ENCODE measurements at regions of chr2 and their contacts with region 1.

Region 1: GRCh38 chr2:131093006-131093695 is at the start of gene FAM168B:
- DNase-seq: peak; percentile 89 to 95
- H3K4me3 ChIP-seq: peak within 1 kb of the TSS; percentile 51
- H3K4me3 Mint-ChIP-seq: peak within 1 kb of the TSS; percentile 90
- H3K27ac Mint-ChIP-seq: peak within 1 kb of the TSS; percentile 98
- H3K4me1 ChIP-seq: peaks cover 16% of the 10 kb centered on the region
- H3K4me1 Mint-ChIP-seq: peaks cover 9% of the 10 kb centered on the region
- H3K27me3 ChIP-seq: no peaks in the 10 kb centered on the region
- H3K27me3 Mint-ChIP-seq: no peaks in the 10 kb centered on the region
- CTCF ChIP-seq: no peak
- total RNA-seq, gene FAM168B: 109 and 119 TPM in 2 replicates

Region 2: DNA sequence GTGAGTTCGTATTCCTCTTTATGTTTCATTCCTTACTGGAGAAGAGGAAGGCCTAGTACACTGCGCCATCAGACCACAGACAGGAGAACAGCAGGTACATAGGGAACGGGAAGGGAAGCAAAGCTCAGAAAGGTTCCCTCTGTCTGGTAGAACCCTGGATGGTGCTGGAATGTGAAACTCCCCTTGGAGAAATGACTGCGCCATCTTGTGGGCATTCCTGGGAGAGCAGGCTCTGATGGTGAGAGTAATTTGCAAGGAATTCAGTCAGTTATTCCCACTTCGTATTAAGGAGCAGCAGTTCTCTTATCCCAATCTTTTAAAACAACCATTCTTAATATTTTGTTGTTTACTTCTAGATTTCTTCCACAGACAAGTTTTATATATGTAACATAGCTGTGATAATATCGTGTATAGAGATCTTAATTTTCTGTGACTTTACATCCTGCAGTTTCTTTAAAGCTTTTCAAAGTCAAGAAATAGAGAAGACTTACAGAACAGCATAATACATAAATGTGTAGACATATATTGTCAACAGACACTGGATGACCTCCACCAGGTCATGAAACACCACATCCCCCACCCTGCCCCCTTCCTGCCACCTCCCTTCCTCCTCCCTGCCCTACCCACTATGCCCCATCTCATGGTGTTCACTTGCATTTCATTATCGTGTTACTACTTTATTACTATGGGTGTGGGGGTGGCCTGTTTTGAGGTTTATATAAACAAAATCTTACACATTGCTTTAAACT is 172.6 kb before region 1 on chr2:
- CTCF ChIA-PET with region 1: no interaction called
- POLR2A ChIA-PET with region 1: interaction called, 10 read pairs
- intact Hi-C with region 1: no loop called
- DNase-seq: peak; percentile 71 to 82
- H3K4me3 ChIP-seq: no peak overlapping the region
- H3K4me3 Mint-ChIP-seq: no peak overlapping the region
- H3K27ac Mint-ChIP-seq: no peak overlapping the region
- H3K4me1 ChIP-seq: no peaks in the 10 kb centered on the region
- H3K4me1 Mint-ChIP-seq: no peaks in the 10 kb centered on the region
- H3K27me3 ChIP-seq: no peaks in the 10 kb centered on the region
- H3K27me3 Mint-ChIP-seq: no peaks in the 10 kb centered on the region
- CTCF ChIP-seq: peak; percentile 82 to 88

Region 3: DNA sequence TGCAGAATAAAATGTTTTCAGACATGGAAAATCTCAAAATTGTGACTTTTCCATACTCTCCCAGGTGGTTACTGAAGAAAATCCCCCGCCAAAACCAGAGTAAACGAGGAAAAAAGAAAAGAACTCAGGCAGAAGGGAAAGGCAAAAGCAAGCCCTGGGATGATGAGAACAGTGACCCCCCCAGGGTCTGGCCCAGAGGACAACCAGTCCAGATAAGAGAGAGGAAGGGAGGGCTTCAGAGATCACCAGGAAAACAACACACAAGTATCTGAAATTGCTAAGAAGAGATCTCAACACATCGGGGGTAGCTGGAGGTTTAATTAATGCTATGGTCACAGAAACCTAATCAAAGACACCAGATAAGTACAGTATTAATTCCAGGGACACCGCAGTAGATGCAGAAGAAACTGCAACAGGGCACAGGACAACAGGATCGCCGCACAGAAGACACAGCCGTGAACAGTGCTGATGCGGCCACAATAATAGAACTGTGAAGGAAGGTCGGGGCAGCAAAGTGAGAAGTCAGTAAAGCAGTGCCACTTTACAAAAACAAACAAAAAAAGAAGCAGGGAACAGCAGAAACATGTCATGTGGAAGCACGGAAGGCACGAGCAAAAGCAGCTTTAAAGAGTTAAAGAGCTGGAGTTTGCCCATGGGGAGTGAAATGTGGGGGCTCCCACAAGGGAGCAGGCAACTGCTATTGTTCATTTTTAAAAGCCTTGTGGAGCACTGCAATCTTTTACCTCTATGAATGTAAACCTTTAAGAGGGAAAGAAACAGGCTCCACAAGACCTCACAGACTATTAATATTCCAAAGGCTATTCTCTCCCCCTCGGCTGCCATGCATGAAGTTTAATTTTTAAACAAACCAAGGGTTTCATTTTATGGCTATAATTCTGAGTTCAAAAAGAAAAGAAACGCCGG is 28.3 kb before region 1 on chr2:
- CTCF ChIA-PET with region 1: no interaction called
- POLR2A ChIA-PET with region 1: no interaction called
- intact Hi-C with region 1: no loop called
- DNase-seq: no peak
- H3K4me3 ChIP-seq: no peak overlapping the region
- H3K4me3 Mint-ChIP-seq: no peak overlapping the region
- H3K27ac Mint-ChIP-seq: no peak overlapping the region
- H3K4me1 ChIP-seq: no peaks in the 10 kb centered on the region
- H3K4me1 Mint-ChIP-seq: peaks cover 7% of the 10 kb centered on the region
- H3K27me3 ChIP-seq: no peaks in the 10 kb centered on the region
- H3K27me3 Mint-ChIP-seq: no peaks in the 10 kb centered on the region
- CTCF ChIP-seq: no peak

Region 4: GRCh38 chr2:131076707-131077106 is 16.4 kb before region 1 on chr2:
- CTCF ChIA-PET with region 1: no interaction called
- POLR2A ChIA-PET with region 1: no interaction called
- intact Hi-C with region 1: no loop called
- DNase-seq: no peak
- H3K4me3 ChIP-seq: no peak overlapping the region
- H3K4me3 Mint-ChIP-seq: no peak overlapping the region
- H3K27ac Mint-ChIP-seq: no peak overlapping the region
- H3K4me1 ChIP-seq: no peaks in the 10 kb centered on the region
- H3K4me1 Mint-ChIP-seq: peaks cover 8% of the 10 kb centered on the region
- H3K27me3 ChIP-seq: no peaks in the 10 kb centered on the region
- H3K27me3 Mint-ChIP-seq: no peaks in the 10 kb centered on the region
- CTCF ChIP-seq: no peak

Region 5: DNA sequence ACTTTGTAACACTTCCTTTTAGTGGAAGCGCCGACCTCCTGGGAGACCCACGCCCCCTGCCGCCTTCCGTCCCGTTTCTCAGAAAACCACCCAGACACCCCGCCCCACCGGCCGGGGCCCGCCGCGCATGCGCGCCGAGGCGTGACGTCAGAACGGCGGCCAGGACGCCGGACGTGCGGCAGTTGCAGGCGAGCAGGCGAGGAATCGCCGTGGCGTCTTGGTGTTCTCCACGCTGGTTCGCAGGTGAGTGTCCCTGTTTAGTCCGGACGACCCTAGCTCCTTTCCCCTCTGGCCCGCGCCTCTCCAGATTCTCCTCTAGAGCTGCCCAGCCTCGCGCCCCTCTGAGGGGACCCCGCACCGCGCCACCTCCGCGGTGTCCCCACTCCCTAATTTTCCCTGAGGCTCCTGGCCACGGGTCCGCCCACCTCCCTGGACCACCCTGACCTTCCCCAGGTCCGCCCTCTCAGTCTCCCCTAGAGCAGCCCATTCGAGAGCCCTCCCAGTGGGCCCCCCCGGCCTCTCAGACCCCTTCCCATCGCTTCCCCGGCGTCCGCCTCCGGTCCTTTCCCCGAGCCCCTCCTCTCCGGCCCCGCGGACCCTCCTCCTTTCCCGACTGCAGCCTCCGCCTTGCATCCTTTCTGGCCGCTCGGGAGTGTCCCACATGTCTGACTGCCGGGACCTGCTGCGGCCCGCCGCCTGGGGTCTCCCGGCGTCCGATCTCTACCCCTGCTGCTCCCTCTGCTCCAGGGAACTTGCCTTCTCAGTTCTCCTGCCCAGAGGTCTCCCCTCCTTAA is 12.2 kb after region 1 on chr2 and contains the start of gene PLEKHB2:
- CTCF ChIA-PET with region 1: interaction called, 14 read pairs
- POLR2A ChIA-PET with region 1: interaction called, 18 read pairs
- intact Hi-C with region 1: loop called (anchors 1 kb)
- DNase-seq: peak; percentile 92 to 97
- H3K4me3 ChIP-seq: peak within 1 kb of the TSS; percentile 97
- H3K4me3 Mint-ChIP-seq: peak within 1 kb of the TSS; percentile 96
- H3K27ac Mint-ChIP-seq: peak within 1 kb of the TSS; percentile 92
- H3K4me1 ChIP-seq: 0 out of 2 replicates have a peak, but pooled peaks cover 13% of the 10 kb centered on the region
- H3K4me1 Mint-ChIP-seq: peaks cover 20% of the 10 kb centered on the region
- H3K27me3 ChIP-seq: no peaks in the 10 kb centered on the region
- H3K27me3 Mint-ChIP-seq: no peaks in the 10 kb centered on the region
- CTCF ChIP-seq: peak in 1 of 2 experiments; percentile 57
- total RNA-seq, gene PLEKHB2: 132 and 139 TPM in 2 replicates

Region 6: GRCh38 chr2:131492418-131493198 is 399.5 kb after region 1 on chr2:
- CTCF ChIA-PET with region 1: no interaction called
- POLR2A ChIA-PET with region 1: interaction called, 3 read pairs
- intact Hi-C with region 1: loop called (anchors 5 kb)
- DNase-seq: peak; percentile 97 to 98
- H3K4me3 ChIP-seq: peak overlapping the region; percentile 96
- H3K4me3 Mint-ChIP-seq: peak overlapping the region; percentile 95
- H3K27ac Mint-ChIP-seq: peak overlapping the region; percentile 98
- H3K4me1 ChIP-seq: no peaks in the 10 kb centered on the region
- H3K4me1 Mint-ChIP-seq: no peaks in the 10 kb centered on the region
- H3K27me3 ChIP-seq: no peaks in the 10 kb centered on the region
- H3K27me3 Mint-ChIP-seq: no peaks in the 10 kb centered on the region
- CTCF ChIP-seq: peak; percentile 90 to 91

Measured in Caco-2 (cell line).